HCT116 (cell line): ENCODE measurements at regions of chr17 and their contacts with region 1.

Region 1: GRCh38 chr17:7484067-7484918 is at the start of gene POLR2A:
- DNase-seq: peak; percentile 92
- ATAC-seq: peak; percentile 78
- H3K4me3 ChIP-seq: peak within 1 kb of the TSS; percentile 95 to 100
- H3K27ac ChIP-seq: peak within 1 kb of the TSS; percentile 87
- H3K4me1 ChIP-seq: peaks cover 12 to 52% of the 10 kb centered on the region in 2 experiments; a peak in 3 of 4 replicates
- H3K27me3 ChIP-seq: no peaks in the 10 kb centered on the region
- CTCF ChIP-seq: no peak
- POLR2A ChIP-seq: peak; percentile 100
- RAD21 ChIP-seq: no peak
- total RNA-seq, gene POLR2A: 205 TPM

Region 2: GRCh38 chr17:7351665-7352501 is 132.4 kb before region 1 on chr17 and contains the start of gene KCTD11:
- CTCF ChIA-PET with region 1: no interaction called
- POLR2A ChIA-PET with region 1: interaction called, 3 read pairs
- RAD21 ChIA-PET with region 1: no interaction called
- intact Hi-C with region 1: loop called (anchors 2 kb)
- DNase-seq: peak; percentile 79
- ATAC-seq: peak; percentile 76
- H3K4me3 ChIP-seq: peak within 1 kb of the TSS; percentile 79 to 89
- H3K27ac ChIP-seq: peak within 1 kb of the TSS; percentile 99
- H3K4me1 ChIP-seq: peaks cover 29 to 69% of the 10 kb centered on the region in 2 experiments
- H3K27me3 ChIP-seq: no peaks in the 10 kb centered on the region
- CTCF ChIP-seq: peak in 1 of 3 experiments; percentile 60; a peak in 2 of 6 replicates
- POLR2A ChIP-seq: peak; percentile 49
- RAD21 ChIP-seq: no peak
- total RNA-seq, gene KCTD11: 5.4 TPM

Region 3: GRCh38 chr17:7403977-7404736 is 80.1 kb before region 1 on chr17 and contains the start of gene TMEM256:
- CTCF ChIA-PET with region 1: no interaction called
- POLR2A ChIA-PET with region 1: interaction called, 10 read pairs
- RAD21 ChIA-PET with region 1: no interaction called
- intact Hi-C with region 1: no loop called
- DNase-seq: peak; percentile 98
- ATAC-seq: peak; percentile 88
- H3K4me3 ChIP-seq: peak within 1 kb of the TSS; percentile 61 to 83
- H3K27ac ChIP-seq: peak within 1 kb of the TSS; percentile 70
- H3K4me1 ChIP-seq: peaks cover 33 to 48% of the 10 kb centered on the region in 2 experiments
- H3K27me3 ChIP-seq: no peaks in the 10 kb centered on the region
- CTCF ChIP-seq: no peak
- POLR2A ChIP-seq: peak; percentile 87
- RAD21 ChIP-seq: no peak
- total RNA-seq, gene TMEM256: 110 TPM

Region 4: GRCh38 chr17:7444682-7445618 is 39.3 kb before region 1 on chr17 and contains the start of gene CHRNB1:
- CTCF ChIA-PET with region 1: no interaction called
- POLR2A ChIA-PET with region 1: interaction called, 4 read pairs
- RAD21 ChIA-PET with region 1: interaction called in 1 of 2 experiments, 3 read pairs
- intact Hi-C with region 1: loop called (anchors 2 kb)
- DNase-seq: peak; percentile 52
- ATAC-seq: peak; percentile 91
- H3K4me3 ChIP-seq: peak within 1 kb of the TSS; percentile 54 to 64
- H3K27ac ChIP-seq: peak within 1 kb of the TSS; percentile 70
- H3K4me1 ChIP-seq: peaks cover 17 to 26% of the 10 kb centered on the region in 2 experiments
- H3K27me3 ChIP-seq: no peaks in the 10 kb centered on the region
- CTCF ChIP-seq: no peak
- POLR2A ChIP-seq: no peak
- RAD21 ChIP-seq: no peak
- total RNA-seq, gene CHRNB1: 10.4 TPM